Activated CD8-positive, alpha-beta memory T cell treated with anti-CD3 and anti-CD28 coated beads, Interleukin-2, amount 10 ng/mL, durations not matched to agents 7 days and 5 days (primary cell): ENCODE measurements at regions of chr12 and their contacts with region 1.

Region 1: GRCh38 chr12:49110464-49111155 is at the start of gene LMBR1L:
- DNase-seq: peak; percentile 99
- ATAC-seq: peak; percentile 97
- H3K4me3 Mint-ChIP-seq: peak within 1 kb of the TSS; percentile 94
- H3K27ac Mint-ChIP-seq: peak within 1 kb of the TSS; percentile 87
- H3K4me1 Mint-ChIP-seq: peaks cover 28% of the 10 kb centered on the region
- H3K27me3 Mint-ChIP-seq: no peaks in the 10 kb centered on the region
- total RNA-seq, gene LMBR1L: 46.9 to 53.4 TPM

Region 2: DNA sequence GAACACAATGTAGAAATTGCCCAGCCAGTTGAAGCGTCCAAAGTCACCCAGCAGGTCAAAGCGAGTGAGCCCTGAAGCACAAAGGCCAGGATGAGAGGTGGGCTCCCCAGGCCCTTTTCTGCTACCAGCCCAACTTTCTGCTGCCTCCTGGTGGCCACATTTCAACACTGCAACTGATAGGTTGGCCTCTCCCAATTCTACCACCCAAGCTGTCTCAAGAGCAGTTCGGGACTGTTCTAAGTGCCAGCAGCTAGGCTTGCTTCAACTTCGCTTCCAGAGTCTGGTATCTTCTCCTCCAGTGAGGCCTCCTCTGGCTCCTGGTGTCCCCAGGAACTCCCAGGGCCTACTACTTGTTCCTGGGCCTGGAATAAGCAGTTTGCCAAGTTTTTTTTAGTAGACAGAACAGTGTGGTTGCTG is 12.6 kb before region 1 on chr12:
- CTCF ChIA-PET with region 1: interaction called, 80 read pairs
- DNase-seq: peak; percentile 77
- ATAC-seq: peak; percentile 56
- H3K4me3 Mint-ChIP-seq: no peak overlapping the region
- H3K27ac Mint-ChIP-seq: no peak overlapping the region
- H3K4me1 Mint-ChIP-seq: peaks cover 11% of the 10 kb centered on the region
- H3K27me3 Mint-ChIP-seq: peaks cover 28% of the 10 kb centered on the region

Region 3: DNA sequence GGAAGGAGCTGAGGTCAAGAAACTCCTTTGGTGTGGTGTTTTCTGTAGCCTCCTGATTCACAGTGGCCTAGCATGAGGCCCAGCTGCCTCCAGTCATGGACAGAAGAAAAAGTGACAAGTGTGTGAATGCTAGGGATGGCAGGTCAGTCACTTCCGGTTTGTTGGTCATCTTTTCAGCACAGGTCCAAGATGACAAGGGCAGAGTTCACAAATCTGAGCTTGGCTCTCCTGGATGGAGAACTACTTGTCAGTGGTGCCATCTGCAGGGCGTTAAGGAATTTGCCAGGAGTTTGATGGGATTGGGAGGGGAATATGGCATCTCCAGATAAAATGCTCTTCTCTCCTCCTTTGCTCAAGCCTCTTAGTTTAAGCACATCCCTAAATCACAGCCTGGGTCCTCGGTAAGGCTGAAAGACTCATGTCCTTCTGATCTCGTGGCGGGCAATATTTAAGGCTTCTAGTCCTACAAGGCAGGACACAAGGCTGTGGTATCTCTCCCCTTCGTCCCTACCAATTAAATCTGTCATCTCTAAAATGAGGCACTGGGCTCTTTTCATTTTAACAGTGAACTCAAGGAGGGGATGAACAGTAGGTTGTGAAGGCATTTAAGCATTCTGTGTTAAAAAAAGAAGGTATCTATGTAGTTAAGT is 10.6 kb after region 1 on chr12:
- CTCF ChIA-PET with region 1: interaction called, 10 read pairs
- DNase-seq: no peak
- ATAC-seq: no peak
- H3K4me3 Mint-ChIP-seq: no peak overlapping the region
- H3K27ac Mint-ChIP-seq: no peak overlapping the region
- H3K4me1 Mint-ChIP-seq: no peaks in the 10 kb centered on the region
- H3K27me3 Mint-ChIP-seq: no peaks in the 10 kb centered on the region

Region 4: GRCh38 chr12:49208676-49209075 is 98.1 kb after region 1 on chr12:
- CTCF ChIA-PET with region 1: no interaction called
- DNase-seq: no peak
- ATAC-seq: no peak
- H3K4me3 Mint-ChIP-seq: no peak overlapping the region
- H3K27ac Mint-ChIP-seq: no peak overlapping the region
- H3K4me1 Mint-ChIP-seq: no peaks in the 10 kb centered on the region
- H3K27me3 Mint-ChIP-seq: peaks cover 3% of the 10 kb centered on the region